Aorta (tissue), 5 donors: ENCODE measurements at regions of chr7 and their contacts with region 1.

Region 1: GRCh38 chr7:29105752-29106668 is 40.3 kb downstream of the CPVL start:
- DNase-seq: no peak
- ATAC-seq: peak; percentile 72
- H3K4me3 ChIP-seq: no peak overlapping the region
- H3K27ac ChIP-seq: no peak overlapping the region
- H3K4me1 ChIP-seq: no peaks in the 10 kb centered on the region
- H3K27me3 ChIP-seq: no peaks in the 10 kb centered on the region

Region 2: GRCh38 chr7:28921822-28922221 is 184.2 kb before region 1 on chr7:
- intact Hi-C with region 1: loop called (anchors 2 kb)
- DNase-seq: no peak
- ATAC-seq: peak; percentile 91
- H3K4me3 ChIP-seq: no peak overlapping the region
- H3K27ac ChIP-seq: no peak overlapping the region
- H3K4me1 ChIP-seq: no peaks in the 10 kb centered on the region
- H3K27me3 ChIP-seq: no peaks in the 10 kb centered on the region

Region 3: GRCh38 chr7:28926871-28927597 is 179.0 kb before region 1 on chr7:
- intact Hi-C with region 1: loop called (anchors 2 kb)
- DNase-seq: peak; percentile 82 to 84
- ATAC-seq: peak; percentile 92
- H3K4me3 ChIP-seq: peak overlapping the region; percentile 44 to 76
- H3K27ac ChIP-seq: no peak overlapping the region
- H3K4me1 ChIP-seq: no peaks in the 10 kb centered on the region
- H3K27me3 ChIP-seq: no peaks in the 10 kb centered on the region

Region 4: GRCh38 chr7:28955718-28956619 is 150.0 kb before region 1 on chr7:
- intact Hi-C with region 1: loop called in 1 of 2 experiments (anchors 10 kb)
- DNase-seq: peak; percentile 72 to 89
- ATAC-seq: peak; percentile 71
- H3K4me3 ChIP-seq: no peak overlapping the region
- H3K27ac ChIP-seq: no peak overlapping the region
- H3K4me1 ChIP-seq: no peaks in the 10 kb centered on the region
- H3K27me3 ChIP-seq: no peaks in the 10 kb centered on the region